Right cardiac atrium (tissue), 5 donors: ENCODE measurements at regions of chr7 and their contacts with region 1.

Region 1: GRCh38 chr7:54839538-54840213 is 80.7 kb upstream of the SEC61G start:
- DNase-seq: peak; percentile 86 to 93 (median 93)
- ATAC-seq: peak; percentile 93 to 97
- H3K4me3 ChIP-seq: no peak overlapping the region
- H3K27ac ChIP-seq: no peak overlapping the region
- H3K4me1 ChIP-seq: peaks cover 7% of the 10 kb centered on the region
- H3K27me3 ChIP-seq: no peaks in the 10 kb centered on the region

Region 2: GRCh38 chr7:54773472-54774399 is 65.9 kb before region 1 on chr7:
- intact Hi-C with region 1: loop called in 1 of 4 experiments (anchors 5 kb)
- DNase-seq: peak; percentile 82 to 92 (median 88)
- ATAC-seq: peak; percentile 94 to 95
- H3K4me3 ChIP-seq: peak overlapping the region; percentile 59
- H3K27ac ChIP-seq: no peak overlapping the region
- H3K4me1 ChIP-seq: no peaks in the 10 kb centered on the region
- H3K27me3 ChIP-seq: no peaks in the 10 kb centered on the region

Region 3: GRCh38 chr7:54788664-54789063 is 51.0 kb before region 1 on chr7:
- intact Hi-C with region 1: loop called in 3 of 4 experiments (anchors 5 to 10 kb)
- DNase-seq: no peak
- ATAC-seq: peak; percentile 81 to 90
- H3K4me3 ChIP-seq: no peak overlapping the region
- H3K27ac ChIP-seq: no peak overlapping the region
- H3K4me1 ChIP-seq: no peaks in the 10 kb centered on the region
- H3K27me3 ChIP-seq: no peaks in the 10 kb centered on the region

Region 4: GRCh38 chr7:54877683-54878082 is 38.0 kb after region 1 on chr7:
- intact Hi-C with region 1: no loop called
- DNase-seq: no peak
- ATAC-seq: no peak
- H3K4me3 ChIP-seq: no peak overlapping the region
- H3K27ac ChIP-seq: no peak overlapping the region
- H3K4me1 ChIP-seq: no peaks in the 10 kb centered on the region
- H3K27me3 ChIP-seq: no peaks in the 10 kb centered on the region

Region 5: GRCh38 chr7:54944179-54944578 is 104.5 kb after region 1 on chr7:
- intact Hi-C with region 1: no loop called
- DNase-seq: no peak
- ATAC-seq: no peak
- H3K4me3 ChIP-seq: no peak overlapping the region
- H3K27ac ChIP-seq: no peak overlapping the region
- H3K4me1 ChIP-seq: no peaks in the 10 kb centered on the region
- H3K27me3 ChIP-seq: no peaks in the 10 kb centered on the region